ENCODE measurements at regions of chr14 and their contacts with region 1.

Region 1: DNA sequence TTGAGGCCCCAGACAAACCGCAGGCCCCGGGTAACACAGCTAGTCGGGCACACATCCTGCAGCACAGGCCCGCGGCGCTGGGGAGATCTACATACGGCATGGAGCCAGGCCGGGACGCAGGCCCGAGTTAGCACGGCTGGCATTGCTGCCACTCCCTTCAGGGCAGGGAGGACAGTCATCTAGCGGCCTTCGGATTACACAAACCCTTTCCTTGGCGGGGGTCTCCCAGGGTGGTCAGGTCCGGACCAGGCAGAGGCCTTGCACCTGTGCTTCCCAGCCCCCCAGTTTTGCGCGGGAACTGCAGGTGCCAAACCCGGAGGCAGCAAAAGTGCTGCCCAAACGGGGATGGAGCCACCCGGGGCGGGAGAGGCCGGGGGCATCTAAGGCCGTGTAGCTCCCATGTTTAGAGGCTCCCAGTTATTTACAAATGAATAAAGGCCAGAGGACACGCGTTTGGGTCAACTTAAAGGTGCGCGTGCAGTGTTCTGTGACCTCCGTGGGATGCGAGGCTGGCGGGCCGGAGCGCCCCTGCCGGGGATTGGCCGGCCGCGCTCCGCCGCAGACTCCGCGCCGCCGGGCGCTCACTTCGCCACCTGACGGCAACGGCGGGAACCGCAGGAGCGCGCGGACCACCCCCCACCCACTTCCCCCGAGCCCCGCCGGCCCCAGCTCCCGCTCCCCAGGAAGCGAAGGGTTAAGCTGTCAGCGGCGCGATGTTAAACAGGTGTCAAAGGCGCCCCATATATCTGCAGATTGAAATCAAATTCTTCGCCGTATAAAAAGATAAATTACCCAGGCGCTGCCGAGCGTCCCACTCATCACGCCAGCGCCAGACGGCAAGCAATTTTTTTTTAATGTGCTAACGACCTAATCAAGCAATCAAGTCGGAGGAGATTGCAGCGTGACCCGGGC is 18.1 kb downstream of the VSX2 start:
- DNase-seq: peak; percentile 36 to 79 (median 61)
- ATAC-seq: peak; percentile 97
- H3K4me3 ChIP-seq: peak overlapping the region; percentile 56 to 63
- H3K4me3 Mint-ChIP-seq: peak overlapping the region; percentile 83
- H3K27ac ChIP-seq: no peak overlapping the region
- H3K27ac Mint-ChIP-seq: no peak overlapping the region
- H3K4me1 ChIP-seq: peaks cover 6% of the 10 kb centered on the region
- H3K4me1 Mint-ChIP-seq: peaks cover 6% of the 10 kb centered on the region
- H3K27me3 ChIP-seq: peaks cover 0 to 3% of the 10 kb centered on the region in 2 experiments
- H3K27me3 Mint-ChIP-seq: peaks cover 11% of the 10 kb centered on the region
- CTCF ChIP-seq: peak; percentile 98

Region 2: GRCh38 chr14:74109369-74109768 is 148.0 kb before region 1 on chr14:
- CTCF ChIA-PET with region 1: interaction called, 16 read pairs
- POLR2A ChIA-PET with region 1: no interaction called
- intact Hi-C with region 1: loop called in 1 of 2 experiments (anchors 1 kb)
- DNase-seq: no peak
- ATAC-seq: no peak
- H3K4me3 ChIP-seq: no peak overlapping the region
- H3K4me3 Mint-ChIP-seq: no peak overlapping the region
- H3K27ac ChIP-seq: no peak overlapping the region
- H3K27ac Mint-ChIP-seq: no peak overlapping the region
- H3K4me1 ChIP-seq: no peaks in the 10 kb centered on the region
- H3K4me1 Mint-ChIP-seq: no peaks in the 10 kb centered on the region
- H3K27me3 ChIP-seq: no peaks in the 10 kb centered on the region
- H3K27me3 Mint-ChIP-seq: no peaks in the 10 kb centered on the region
- CTCF ChIP-seq: no peak

Region 3: DNA sequence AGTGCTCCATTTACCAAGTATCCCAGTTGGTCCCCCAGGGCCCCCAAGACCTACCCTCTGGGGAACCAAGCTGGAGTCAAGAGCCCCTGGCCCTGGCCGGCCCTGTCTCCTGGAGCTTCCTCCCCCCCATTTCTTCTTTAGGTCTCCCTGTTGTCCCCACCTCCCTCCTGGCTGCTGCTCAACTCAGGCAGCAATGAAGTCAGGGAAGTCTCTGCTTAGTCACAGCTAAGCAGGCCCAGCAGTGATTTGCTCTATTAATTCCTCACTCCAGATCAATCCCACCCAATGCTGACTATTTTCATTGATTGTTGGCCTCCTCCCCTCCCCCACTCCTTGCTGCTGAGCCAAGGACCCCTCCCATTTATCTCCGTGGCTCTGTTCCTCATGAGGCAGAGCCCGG is 10.3 kb after region 1 on chr14:
- CTCF ChIA-PET with region 1: interaction called, 10 read pairs
- POLR2A ChIA-PET with region 1: no interaction called
- intact Hi-C with region 1: no loop called
- DNase-seq: no peak
- ATAC-seq: no peak
- H3K4me3 ChIP-seq: no peak overlapping the region
- H3K4me3 Mint-ChIP-seq: no peak overlapping the region
- H3K27ac ChIP-seq: no peak overlapping the region
- H3K27ac Mint-ChIP-seq: no peak overlapping the region
- H3K4me1 ChIP-seq: no peaks in the 10 kb centered on the region
- H3K4me1 Mint-ChIP-seq: no peaks in the 10 kb centered on the region
- H3K27me3 ChIP-seq: no peaks in the 10 kb centered on the region
- H3K27me3 Mint-ChIP-seq: peaks cover 15% of the 10 kb centered on the region
- CTCF ChIP-seq: no peak

Region 4: DNA sequence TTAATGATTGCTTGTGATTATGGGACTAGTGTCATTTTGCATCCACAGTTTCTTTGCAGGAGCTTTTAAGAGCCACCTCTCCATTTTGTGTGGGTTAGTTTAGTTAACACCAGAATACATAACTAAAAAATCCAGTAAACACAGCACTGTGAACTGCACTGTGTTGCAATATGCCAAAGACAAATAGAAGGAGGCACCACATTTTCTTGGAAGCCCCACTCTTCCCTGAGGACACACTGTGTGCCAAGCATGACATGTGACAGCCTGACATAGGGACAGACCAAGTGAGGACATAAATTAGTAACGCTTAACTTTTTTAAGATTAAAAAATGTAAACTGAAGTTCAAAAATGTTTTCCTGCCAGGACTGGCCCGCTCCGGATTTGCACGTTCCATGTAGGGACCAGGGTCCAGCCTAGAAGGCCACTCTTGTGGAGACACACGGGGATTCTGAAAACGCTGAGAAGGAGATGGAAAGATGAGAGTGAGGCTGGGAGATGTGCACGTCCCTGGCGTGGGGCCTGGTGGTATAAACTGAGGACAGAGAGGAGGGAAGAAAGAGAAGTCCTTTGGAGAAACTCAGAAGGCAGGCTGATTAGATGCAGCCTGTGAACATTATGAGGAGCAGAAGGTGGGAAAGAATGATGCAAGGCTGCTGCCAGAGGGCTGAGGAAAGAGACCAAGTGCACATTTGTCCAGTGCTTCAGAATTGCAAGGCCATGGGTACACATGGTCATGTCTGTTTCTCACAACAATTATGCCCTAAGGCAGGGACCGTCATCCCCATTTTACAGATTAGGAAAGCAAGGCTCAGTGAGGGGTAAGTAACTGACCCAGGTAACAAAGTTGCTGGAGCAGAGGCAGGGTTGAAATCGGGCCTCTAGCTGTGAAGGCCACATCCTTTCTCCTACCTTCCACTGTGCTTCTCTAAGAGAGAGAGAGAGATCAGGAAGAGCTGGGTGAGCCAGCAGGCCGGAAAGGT is 281.4 kb after region 1 on chr14:
- CTCF ChIA-PET with region 1: no interaction called
- POLR2A ChIA-PET with region 1: no interaction called
- intact Hi-C with region 1: no loop called
- DNase-seq: no peak
- ATAC-seq: no peak
- H3K4me3 ChIP-seq: no peak overlapping the region
- H3K4me3 Mint-ChIP-seq: no peak overlapping the region
- H3K27ac ChIP-seq: no peak overlapping the region
- H3K27ac Mint-ChIP-seq: no peak overlapping the region
- H3K4me1 ChIP-seq: no peaks in the 10 kb centered on the region
- H3K4me1 Mint-ChIP-seq: no peaks in the 10 kb centered on the region
- H3K27me3 ChIP-seq: no peaks in the 10 kb centered on the region
- H3K27me3 Mint-ChIP-seq: no peaks in the 10 kb centered on the region
- CTCF ChIP-seq: no peak

Measured in CD8-positive, alpha-beta T cell (primary cell).